B cell (primary cell): ENCODE measurements at regions of chr2 and their contacts with region 1.

Region 1: GRCh38 chr2:42095923-42096408 is 48.1 kb downstream of the PKDCC start:
- DNase-seq: peak; percentile 83
- ATAC-seq: peak; percentile 39
- H3K4me3 ChIP-seq: no peak overlapping the region
- H3K4me3 Mint-ChIP-seq: no peak overlapping the region
- H3K27ac ChIP-seq: no peak overlapping the region
- H3K27ac Mint-ChIP-seq: no peak overlapping the region
- H3K4me1 ChIP-seq: peaks cover 50 to 54% of the 10 kb centered on the region in 2 donors
- H3K4me1 Mint-ChIP-seq: peaks cover 46% of the 10 kb centered on the region
- H3K27me3 ChIP-seq: peaks cover 0 to 4% (median 0%) of the 10 kb centered on the region in 4 experiments
- H3K27me3 Mint-ChIP-seq: no peaks in the 10 kb centered on the region
- CTCF ChIP-seq: peak; percentile 93

Region 2: DNA sequence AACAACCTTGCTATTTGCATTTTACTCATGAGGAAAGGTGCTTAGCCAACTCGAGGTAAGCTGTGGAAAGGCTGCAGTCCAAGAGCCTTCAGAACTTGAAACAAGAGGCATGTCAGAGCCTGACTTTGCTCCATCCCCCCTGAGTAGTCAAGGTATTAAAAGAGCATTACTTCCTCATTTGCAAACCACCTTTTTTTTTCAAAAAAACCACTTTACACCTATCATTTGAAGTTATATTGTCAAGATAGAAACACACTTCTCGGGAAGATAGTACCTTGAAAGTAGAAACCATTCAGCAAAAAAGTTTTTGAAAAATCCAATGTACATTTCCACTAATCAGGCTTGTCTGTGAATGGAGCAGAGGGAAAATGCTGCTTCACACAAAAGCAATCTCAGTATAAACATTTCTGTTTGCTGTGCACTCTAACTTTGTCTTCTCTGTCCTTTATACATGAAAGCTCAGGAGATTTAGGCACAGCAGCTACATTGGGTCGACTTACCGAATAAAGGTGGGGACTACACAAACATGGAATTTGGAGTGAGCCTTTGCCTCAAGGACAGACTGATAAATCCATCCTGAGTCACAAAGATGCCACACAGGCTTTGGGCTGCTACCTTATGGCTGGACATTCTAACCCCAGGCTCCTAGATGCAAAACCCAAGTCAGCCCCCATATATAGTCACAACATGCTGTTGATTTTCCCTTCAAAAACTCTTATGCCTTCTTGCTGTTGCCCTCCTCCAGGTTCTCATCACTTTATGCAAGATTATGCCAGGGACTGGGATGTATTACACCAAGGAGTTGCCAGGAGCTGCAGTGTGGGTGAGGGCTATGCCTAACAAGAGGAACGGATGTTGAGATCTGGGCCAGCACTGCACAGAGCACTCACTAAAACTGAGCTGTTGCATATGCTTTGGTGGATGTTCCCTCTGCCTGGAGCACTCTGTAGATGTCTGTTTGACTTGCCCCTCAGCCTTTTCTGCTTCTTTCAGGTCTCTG is 31.8 kb after region 1 on chr2:
- CTCF ChIA-PET with region 1: interaction called, 21 read pairs
- POLR2A ChIA-PET with region 1: interaction called, 6 read pairs
- intact Hi-C with region 1: no loop called
- DNase-seq: peak; percentile 76
- ATAC-seq: peak; percentile 60
- H3K4me3 ChIP-seq: peak overlapping the region in 1 of 5 experiments; percentile 42
- H3K4me3 Mint-ChIP-seq: peak overlapping the region; percentile 74
- H3K27ac ChIP-seq: peak overlapping the region; percentile 12 to 30
- H3K27ac Mint-ChIP-seq: peak overlapping the region; percentile 59
- H3K4me1 ChIP-seq: peaks cover 80 to 85% of the 10 kb centered on the region in 2 donors
- H3K4me1 Mint-ChIP-seq: peaks cover 78% of the 10 kb centered on the region
- H3K27me3 ChIP-seq: no peaks in the 10 kb centered on the region
- H3K27me3 Mint-ChIP-seq: no peaks in the 10 kb centered on the region
- CTCF ChIP-seq: no peak

Region 3: GRCh38 chr2:42169100-42169873 is 73.3 kb after region 1 on chr2 and contains the start of gene EML4:
- CTCF ChIA-PET with region 1: interaction called, 82 read pairs
- POLR2A ChIA-PET with region 1: interaction called, 3 read pairs
- intact Hi-C with region 1: loop called (anchors 2 kb)
- DNase-seq: peak; percentile 96
- ATAC-seq: peak; percentile 89
- H3K4me3 ChIP-seq: peak within 1 kb of the TSS; percentile 77 to 98 (median 88)
- H3K4me3 Mint-ChIP-seq: no peak within 1 kb of the TSS
- H3K27ac ChIP-seq: peak within 1 kb of the TSS; percentile 88 to 91
- H3K27ac Mint-ChIP-seq: no peak within 1 kb of the TSS
- H3K4me1 ChIP-seq: peaks cover 38 to 40% of the 10 kb centered on the region in 2 donors
- H3K4me1 Mint-ChIP-seq: peaks cover 28% of the 10 kb centered on the region
- H3K27me3 ChIP-seq: no peaks in the 10 kb centered on the region
- H3K27me3 Mint-ChIP-seq: no peaks in the 10 kb centered on the region
- CTCF ChIP-seq: no peak
- total RNA-seq, gene EML4: 134 and 138 TPM in 2 replicates

Region 4: DNA sequence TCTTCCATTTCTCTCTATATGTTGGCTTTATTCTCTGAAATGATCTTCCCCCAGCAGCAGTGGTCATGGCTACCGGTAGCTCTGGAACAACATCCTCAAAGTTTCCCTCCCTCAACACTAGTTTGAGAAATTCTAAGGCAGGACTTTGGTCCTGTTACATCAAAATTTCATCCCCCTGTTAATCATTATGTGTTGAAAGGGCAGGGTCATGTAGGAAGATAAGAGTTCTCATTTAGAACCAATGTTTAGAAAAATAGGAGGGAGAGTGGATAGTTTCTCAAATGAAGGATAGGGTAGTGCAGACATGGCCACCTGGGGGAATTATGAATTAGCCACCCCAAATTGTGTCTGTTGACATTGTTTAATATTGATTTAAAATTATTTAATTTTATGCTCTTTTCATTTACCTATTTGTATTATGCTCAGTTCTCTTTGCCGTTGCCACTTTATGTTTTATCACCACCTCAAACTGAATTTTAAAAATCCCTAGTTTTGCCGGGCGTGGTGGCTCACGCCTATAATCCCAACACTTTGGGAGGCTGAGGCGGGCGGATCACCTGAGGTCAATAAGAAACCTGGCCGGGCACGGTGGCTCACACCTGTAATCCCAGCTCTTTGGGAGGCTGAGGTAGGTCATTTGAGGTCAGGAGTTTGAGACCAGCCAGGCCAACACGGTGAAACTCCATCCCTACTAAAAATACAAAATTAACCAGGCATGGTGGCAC is 95.5 kb after region 1 on chr2:
- CTCF ChIA-PET with region 1: interaction called, 102 read pairs
- POLR2A ChIA-PET with region 1: interaction called, 4 read pairs
- intact Hi-C with region 1: loop called (anchors 1 kb)
- DNase-seq: no peak
- ATAC-seq: no peak
- H3K4me3 ChIP-seq: no peak overlapping the region
- H3K4me3 Mint-ChIP-seq: no peak overlapping the region
- H3K27ac ChIP-seq: no peak overlapping the region
- H3K27ac Mint-ChIP-seq: peak overlapping the region; percentile 42
- H3K4me1 ChIP-seq: peaks cover 13 to 31% of the 10 kb centered on the region in 2 donors
- H3K4me1 Mint-ChIP-seq: peaks cover 49% of the 10 kb centered on the region
- H3K27me3 ChIP-seq: no peaks in the 10 kb centered on the region
- H3K27me3 Mint-ChIP-seq: no peaks in the 10 kb centered on the region
- CTCF ChIP-seq: no peak

Region 5: DNA sequence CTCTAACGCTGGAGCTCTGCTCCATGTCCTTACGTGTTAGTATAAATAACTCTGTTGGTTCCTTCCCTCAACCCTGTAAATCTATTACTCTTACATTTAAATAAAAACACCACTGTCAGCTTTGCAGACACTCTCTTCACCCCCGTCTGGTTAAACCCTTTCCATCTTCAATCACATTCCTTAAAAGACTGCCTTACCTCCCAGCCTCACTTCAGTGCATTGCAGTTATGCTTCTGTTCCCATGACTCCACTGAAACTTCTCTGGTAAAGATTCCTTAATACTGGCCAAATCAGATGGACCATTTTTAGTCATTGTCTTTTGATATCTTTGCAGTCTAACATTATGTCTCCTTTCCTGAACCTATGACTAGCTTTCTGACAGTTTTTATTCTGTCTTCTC is 134.9 kb after region 1 on chr2:
- CTCF ChIA-PET with region 1: interaction called, 81 read pairs
- POLR2A ChIA-PET with region 1: no interaction called
- intact Hi-C with region 1: no loop called
- DNase-seq: no peak
- ATAC-seq: no peak
- H3K4me3 ChIP-seq: no peak overlapping the region
- H3K4me3 Mint-ChIP-seq: no peak overlapping the region
- H3K27ac ChIP-seq: peak overlapping the region in 1 of 2 donors; percentile 15
- H3K27ac Mint-ChIP-seq: peak overlapping the region; percentile 44
- H3K4me1 ChIP-seq: peaks cover 0 to 6% of the 10 kb centered on the region in 2 donors
- H3K4me1 Mint-ChIP-seq: peaks cover 49% of the 10 kb centered on the region
- H3K27me3 ChIP-seq: no peaks in the 10 kb centered on the region
- H3K27me3 Mint-ChIP-seq: no peaks in the 10 kb centered on the region
- CTCF ChIP-seq: no peak

Region 6: DNA sequence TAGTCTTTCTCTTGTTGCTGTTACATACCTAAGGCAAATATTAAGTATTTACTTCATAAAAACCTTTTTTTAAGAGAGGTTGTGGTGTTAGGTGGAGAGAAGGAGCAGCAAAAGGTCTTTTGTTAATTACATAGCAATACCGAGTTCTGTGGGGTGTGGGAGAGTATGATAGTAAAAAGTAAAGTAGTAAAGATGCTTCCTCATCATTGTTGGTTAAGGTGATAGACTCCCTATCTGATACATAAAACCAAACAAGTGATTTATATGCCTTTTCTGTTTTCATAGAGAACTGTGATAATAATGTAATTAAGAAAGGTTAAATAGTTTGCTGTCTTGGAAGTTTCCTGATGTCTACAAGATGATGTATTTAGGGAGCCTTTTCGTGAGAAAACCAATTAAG is 148.6 kb after region 1 on chr2:
- CTCF ChIA-PET with region 1: interaction called, 81 read pairs
- POLR2A ChIA-PET with region 1: no interaction called
- intact Hi-C with region 1: no loop called
- DNase-seq: no peak
- ATAC-seq: no peak
- H3K4me3 ChIP-seq: no peak overlapping the region
- H3K4me3 Mint-ChIP-seq: no peak overlapping the region
- H3K27ac ChIP-seq: no peak overlapping the region
- H3K27ac Mint-ChIP-seq: no peak overlapping the region
- H3K4me1 ChIP-seq: peaks cover 20 to 26% of the 10 kb centered on the region in 2 donors
- H3K4me1 Mint-ChIP-seq: peaks cover 50% of the 10 kb centered on the region
- H3K27me3 ChIP-seq: no peaks in the 10 kb centered on the region
- H3K27me3 Mint-ChIP-seq: no peaks in the 10 kb centered on the region
- CTCF ChIP-seq: no peak

Region 7: DNA sequence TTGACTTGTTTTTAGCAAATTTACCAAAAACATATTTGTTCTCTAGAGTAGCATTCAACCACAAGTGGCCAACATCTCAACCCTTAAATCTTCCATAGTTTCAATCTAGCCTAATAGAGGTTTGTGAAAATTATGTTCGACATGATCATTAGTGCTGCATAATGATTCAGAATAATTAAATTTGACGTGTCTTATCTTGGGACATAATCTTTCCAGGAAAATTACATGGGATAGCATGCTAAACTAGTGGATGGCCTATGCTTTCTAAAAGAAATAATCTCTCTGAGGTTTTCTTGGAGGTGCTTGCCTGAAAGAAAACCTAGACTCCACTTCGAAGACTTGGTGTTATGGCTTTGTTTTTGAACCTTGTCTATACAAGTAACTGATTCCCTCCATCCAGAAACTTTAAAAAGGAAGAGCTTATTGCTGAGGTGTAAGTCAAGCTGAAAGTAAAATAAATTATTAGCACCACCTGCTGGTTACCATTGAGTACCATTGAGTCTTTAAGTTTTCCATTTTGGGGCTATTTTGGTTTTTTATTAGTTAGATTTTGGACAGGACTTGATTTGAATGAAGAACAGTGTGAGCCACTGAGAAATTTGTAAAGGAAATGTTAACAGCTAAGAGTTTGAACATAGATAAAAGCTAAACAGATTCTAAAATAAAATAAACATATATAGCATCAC is 232.3 kb after region 1 on chr2:
- CTCF ChIA-PET with region 1: interaction called, 16 read pairs
- POLR2A ChIA-PET with region 1: no interaction called
- intact Hi-C with region 1: loop called (anchors 10 kb)
- DNase-seq: peak; percentile 23
- ATAC-seq: no peak
- H3K4me3 ChIP-seq: no peak overlapping the region
- H3K4me3 Mint-ChIP-seq: no peak overlapping the region
- H3K27ac ChIP-seq: no peak overlapping the region
- H3K27ac Mint-ChIP-seq: no peak overlapping the region
- H3K4me1 ChIP-seq: no peaks in the 10 kb centered on the region
- H3K4me1 Mint-ChIP-seq: no peaks in the 10 kb centered on the region
- H3K27me3 ChIP-seq: no peaks in the 10 kb centered on the region
- H3K27me3 Mint-ChIP-seq: no peaks in the 10 kb centered on the region
- CTCF ChIP-seq: peak; percentile 40